ENCODE measurements at regions of chr2 and their contacts with region 1.

Region 1: DNA sequence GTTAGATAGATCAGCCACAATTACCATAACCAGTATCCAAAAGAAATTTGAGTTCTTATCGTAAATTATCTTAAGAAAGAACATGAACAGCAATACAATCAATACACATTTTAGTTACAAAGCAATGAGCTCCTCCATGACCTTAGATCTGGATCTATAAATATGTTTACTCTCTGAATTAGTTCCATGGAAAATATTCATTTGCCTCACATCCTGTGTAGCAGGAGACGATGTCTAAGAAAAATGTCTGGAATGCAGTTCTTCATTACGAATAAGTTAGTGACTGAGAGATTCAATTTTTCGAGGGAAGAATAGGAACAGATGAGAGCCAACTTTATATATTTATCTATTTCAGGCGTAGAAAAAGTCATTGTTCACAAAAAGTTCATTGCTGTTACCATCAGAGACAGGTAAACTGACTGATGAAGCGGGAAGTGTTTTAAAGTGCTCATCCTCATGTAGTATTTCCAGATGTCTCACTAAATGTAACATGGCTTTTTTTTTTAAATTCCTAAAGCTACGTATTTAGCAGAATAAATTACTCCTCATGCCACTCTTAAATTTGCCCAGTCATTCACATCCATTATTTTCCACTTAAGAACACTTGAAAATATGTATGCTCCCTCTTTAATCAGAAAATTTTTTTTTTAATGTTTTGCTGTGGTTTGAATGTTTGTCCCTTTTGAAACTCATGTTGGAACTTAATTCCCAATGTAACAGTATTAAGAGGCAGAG is 106.5 kb upstream of the SCN1A start:
- DNase-seq: peak; percentile 58
- ATAC-seq: no peak
- H3K4me3 ChIP-seq: no peak overlapping the region
- H3K27ac ChIP-seq: peak overlapping the region; percentile 48
- H3K4me1 ChIP-seq: peaks cover 50% of the 10 kb centered on the region
- H3K27me3 ChIP-seq: no peaks in the 10 kb centered on the region
- CTCF ChIP-seq: no peak
- EP300 ChIP-seq: peak in 1 of 2 experiments; percentile 89; a peak in 2 of 4 replicates
- POLR2A ChIP-seq: no peak
- RAD21 ChIP-seq: no peak

Region 2: GRCh38 chr2:166127217-166128155 is 106.8 kb before region 1 on chr2 and contains the start of gene SCN1A:
- CTCF ChIA-PET with region 1: no interaction called
- POLR2A ChIA-PET with region 1: no interaction called
- in situ Hi-C with region 1: no loop called
- intact Hi-C with region 1: no loop called
- DNase-seq: peak; percentile 89
- ATAC-seq: peak; percentile 86
- H3K4me3 ChIP-seq: peak within 1 kb of the TSS; percentile 35 to 62 (median 50)
- H3K27ac ChIP-seq: peak within 1 kb of the TSS; percentile 72
- H3K4me1 ChIP-seq: peaks cover 93% of the 10 kb centered on the region
- H3K27me3 ChIP-seq: no peaks in the 10 kb centered on the region
- CTCF ChIP-seq: peak; percentile 81
- EP300 ChIP-seq: peak in 1 of 2 experiments; percentile 76; a peak in 2 of 4 replicates
- POLR2A ChIP-seq: no peak
- RAD21 ChIP-seq: peak; percentile 62; the same call in 1 of the 2 replicates
- total RNA-seq, gene SCN1A: 19.6 and 39.4 TPM in 2 replicates

Region 3: DNA sequence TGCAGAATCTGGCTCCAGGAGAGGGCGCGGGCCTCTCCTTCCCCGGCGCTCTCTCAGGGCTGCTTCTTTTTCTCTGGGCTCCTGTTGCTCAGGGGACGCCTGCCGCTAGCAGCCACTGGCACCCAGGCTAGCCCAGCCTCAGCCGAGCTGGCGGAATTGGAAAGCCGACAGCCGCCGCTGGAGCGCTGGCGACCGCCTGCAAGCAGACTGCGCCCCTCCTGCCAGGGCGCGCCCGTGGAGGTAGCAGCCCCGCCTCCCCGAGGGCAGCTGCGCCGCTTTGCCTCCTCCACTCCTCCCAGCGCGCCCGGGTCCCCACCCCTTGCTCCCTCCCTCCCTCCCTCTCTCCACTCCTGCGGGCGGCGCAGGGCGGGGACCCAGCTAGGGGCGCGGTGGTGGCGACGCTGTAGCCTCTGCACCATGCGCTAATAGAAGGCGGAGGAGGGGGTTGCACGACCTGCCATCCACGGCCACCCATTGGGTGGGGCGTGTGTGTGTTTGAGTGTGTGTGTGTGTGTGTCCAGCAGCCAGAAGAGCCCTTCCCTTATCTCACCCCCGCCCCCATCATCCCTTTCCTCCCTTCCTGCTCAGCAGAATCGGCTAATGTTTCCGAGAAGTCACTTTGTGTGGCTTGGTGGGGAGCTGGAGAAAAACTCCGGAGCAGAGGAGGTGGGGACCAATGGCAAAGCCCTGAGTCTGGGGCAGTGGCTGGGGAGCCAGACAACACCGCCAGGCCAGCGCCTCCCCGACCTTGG is 141.6 kb after region 1 on chr2 and contains the start of gene SCN9A:
- CTCF ChIA-PET with region 1: no interaction called
- POLR2A ChIA-PET with region 1: interaction called, 5 read pairs
- in situ Hi-C with region 1: no loop called
- intact Hi-C with region 1: loop called (anchors 1 kb)
- DNase-seq: peak; percentile 82
- ATAC-seq: peak; percentile 92
- H3K4me3 ChIP-seq: peak within 1 kb of the TSS; percentile 75 to 85 (median 82)
- H3K27ac ChIP-seq: peak within 1 kb of the TSS; percentile 68
- H3K4me1 ChIP-seq: peaks cover 48% of the 10 kb centered on the region
- H3K27me3 ChIP-seq: no peaks in the 10 kb centered on the region; a peak in 1 of 5 replicates
- CTCF ChIP-seq: peak; percentile 52
- EP300 ChIP-seq: peak in 1 of 2 experiments; percentile 18; a peak in 2 of 4 replicates
- POLR2A ChIP-seq: peak; percentile 84 to 90
- RAD21 ChIP-seq: peak; percentile 33; the same call in 1 of the 2 replicates
- total RNA-seq, gene SCN9A: 11.8 and 15.3 TPM in 2 replicates

Measured in HepG2 (cell line).